Naive thymus-derived CD4-positive, alpha-beta T cell (primary cell): ENCODE measurements at regions of chr17 and their contacts with region 1.

Region 1: DNA sequence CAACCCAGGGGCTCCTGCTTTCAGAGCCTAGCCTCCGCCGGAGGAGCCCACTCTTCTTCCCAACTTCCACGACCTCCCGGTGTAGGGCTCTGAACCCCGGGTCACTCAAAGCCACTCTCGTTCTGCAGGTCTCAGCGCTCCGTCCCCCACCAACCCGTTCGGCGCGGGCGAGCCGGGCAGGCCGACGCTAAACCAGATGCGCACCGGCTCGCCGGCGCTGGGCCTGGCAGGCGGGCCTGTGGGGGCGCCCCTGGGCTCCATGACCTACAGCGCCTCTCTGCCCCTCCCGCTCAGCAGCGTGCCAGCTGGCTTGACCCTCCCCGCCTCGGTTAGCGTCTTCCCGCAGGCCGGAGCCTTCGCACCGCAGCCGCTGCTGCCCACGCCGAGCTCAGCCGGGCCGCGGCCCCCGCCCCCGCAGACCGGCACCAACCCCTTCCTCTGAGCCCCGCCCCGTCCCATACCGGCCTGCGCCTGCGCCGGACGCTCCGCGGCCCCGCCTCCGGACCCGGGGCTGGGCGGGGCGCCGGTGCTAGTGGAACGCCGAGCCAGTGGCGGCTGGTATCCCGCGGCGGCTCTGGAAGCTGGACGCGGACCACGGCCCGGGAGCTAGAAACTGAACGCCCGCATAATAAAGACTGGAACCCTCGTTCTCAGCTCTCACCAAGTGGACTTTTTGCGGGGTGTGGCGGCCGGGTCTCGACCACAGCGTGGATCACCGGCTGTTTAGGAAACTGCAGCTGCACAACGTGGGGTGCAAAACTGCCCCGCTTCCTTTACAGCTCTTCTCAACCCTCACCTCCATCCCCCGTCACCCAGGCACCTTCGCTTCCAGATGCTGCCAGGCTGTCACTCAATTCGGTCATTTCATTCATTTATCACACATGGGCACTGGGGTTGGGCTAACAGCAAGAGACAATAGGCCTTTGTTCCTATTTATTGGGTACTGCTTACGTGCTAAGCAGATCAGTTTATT is 5.0 kb upstream of the SPATA20 start:
- DNase-seq: peak; percentile 68 to 96 (median 83)
- ATAC-seq: peak; percentile 90
- H3K4me3 ChIP-seq: peak overlapping the region; percentile 61
- H3K4me3 Mint-ChIP-seq: peak overlapping the region; percentile 83 to 88 (median 85)
- H3K27ac ChIP-seq: peak overlapping the region; percentile 61
- H3K27ac Mint-ChIP-seq: peak overlapping the region; percentile 24 to 90 (median 67)
- H3K4me1 ChIP-seq: peaks cover 10 to 16% of the 10 kb centered on the region in 2 donors
- H3K4me1 Mint-ChIP-seq: peaks cover 0 to 22% (median 22%) of the 10 kb centered on the region in 7 donors
- H3K27me3 ChIP-seq: no peaks in the 10 kb centered on the region
- H3K27me3 Mint-ChIP-seq: peaks cover 0 to 28% (median 7%) of the 10 kb centered on the region in 5 donors

Region 2: GRCh38 chr17:50507871-50508572 is 34.0 kb before region 1 on chr17 and contains the start of gene MYCBPAP:
- CTCF ChIA-PET with region 1: interaction called, 3 read pairs
- POLR2A ChIA-PET with region 1: interaction called, 3 read pairs
- intact Hi-C with region 1: loop called (anchors 1 to 2 kb)
- DNase-seq: peak; percentile 64 to 85 (median 71)
- ATAC-seq: peak; percentile 88
- H3K4me3 ChIP-seq: peak within 1 kb of the TSS; percentile 71
- H3K4me3 Mint-ChIP-seq: peak within 1 kb of the TSS; percentile 84 to 96 (median 93)
- H3K27ac ChIP-seq: peak within 1 kb of the TSS; percentile 75
- H3K27ac Mint-ChIP-seq: peak within 1 kb of the TSS; percentile 88 to 97 (median 94)
- H3K4me1 ChIP-seq: peaks cover 10 to 14% of the 10 kb centered on the region in 2 donors
- H3K4me1 Mint-ChIP-seq: peaks cover 0 to 52% (median 40%) of the 10 kb centered on the region in 7 donors
- H3K27me3 ChIP-seq: no peaks in the 10 kb centered on the region
- H3K27me3 Mint-ChIP-seq: peaks cover 0 to 9% (median 0%) of the 10 kb centered on the region in 5 donors
- total RNA-seq, gene MYCBPAP: 0.90 to 9.0 (median 8.6) TPM

Region 3: DNA sequence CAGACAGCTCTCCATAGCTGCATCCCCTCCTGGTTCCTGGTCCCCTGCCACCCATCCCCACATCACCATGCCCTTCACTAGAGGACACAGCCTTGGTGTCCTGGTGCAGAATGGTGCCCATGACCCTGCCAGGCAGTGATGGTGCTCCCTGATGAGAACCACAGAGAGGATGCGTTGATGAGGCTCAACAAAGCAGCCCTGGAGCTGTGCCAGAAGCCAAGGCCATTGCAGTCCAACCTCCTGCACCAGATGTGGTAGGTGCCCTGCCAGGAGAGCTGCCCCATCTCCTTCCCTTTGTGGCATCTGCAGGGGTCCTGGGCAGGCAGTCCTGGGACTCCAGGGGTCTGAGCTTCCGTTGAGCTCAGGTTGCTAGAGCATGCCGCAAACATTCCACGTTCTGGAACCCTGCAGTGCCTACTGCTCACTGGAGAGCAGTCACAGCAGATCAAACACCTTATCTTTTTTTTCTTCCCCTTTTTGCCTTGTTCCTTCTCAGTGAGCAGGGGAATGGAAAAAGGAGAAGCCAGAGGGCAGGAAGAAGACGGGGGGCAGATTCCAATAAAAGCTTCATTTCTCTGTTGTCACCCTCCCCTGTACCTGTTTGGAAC is 14.7 kb before region 1 on chr17:
- CTCF ChIA-PET with region 1: no interaction called
- POLR2A ChIA-PET with region 1: no interaction called
- intact Hi-C with region 1: no loop called
- DNase-seq: no peak
- ATAC-seq: no peak
- H3K4me3 ChIP-seq: no peak overlapping the region
- H3K4me3 Mint-ChIP-seq: no peak overlapping the region
- H3K27ac ChIP-seq: no peak overlapping the region
- H3K27ac Mint-ChIP-seq: no peak overlapping the region
- H3K4me1 ChIP-seq: peaks cover 0 to 3% of the 10 kb centered on the region in 2 donors
- H3K4me1 Mint-ChIP-seq: peaks cover 0 to 6% (median 0%) of the 10 kb centered on the region in 7 donors
- H3K27me3 ChIP-seq: peaks cover 6 to 9% of the 10 kb centered on the region in 2 donors
- H3K27me3 Mint-ChIP-seq: peaks cover 29 to 36% (median 35%) of the 10 kb centered on the region in 5 donors

Region 4: GRCh38 chr17:50560185-50560824 is 18.3 kb after region 1 on chr17 and contains the start of gene CACNA1G:
- CTCF ChIA-PET with region 1: interaction called, 4 read pairs
- POLR2A ChIA-PET with region 1: interaction called, 9 read pairs
- intact Hi-C with region 1: loop called (anchors 1 kb)
- DNase-seq: peak; percentile 72 to 93 (median 81)
- ATAC-seq: peak; percentile 94
- H3K4me3 ChIP-seq: peak within 1 kb of the TSS; percentile 73
- H3K4me3 Mint-ChIP-seq: peak within 1 kb of the TSS; percentile 68 to 87 (median 80)
- H3K27ac ChIP-seq: no peak within 1 kb of the TSS
- H3K27ac Mint-ChIP-seq: peak within 1 kb of the TSS in 3 of 9 donors; percentile 13 to 28 (median 25)
- H3K4me1 ChIP-seq: peaks cover 20 to 23% of the 10 kb centered on the region in 2 donors
- H3K4me1 Mint-ChIP-seq: peaks cover 12 to 37% (median 21%) of the 10 kb centered on the region in 7 donors
- H3K27me3 ChIP-seq: peaks cover 19 to 27% of the 10 kb centered on the region in 2 donors
- H3K27me3 Mint-ChIP-seq: peaks cover 38 to 71% (median 46%) of the 10 kb centered on the region in 5 donors
- total RNA-seq, gene CACNA1G: not detected